Activated T-helper 1 cell treated with anti-CD3 and anti-CD28 coated beads, Interleukin-12 subunit alpha, Interleukin-12 subunit beta, Interleukin-2, Interleukin-4 antibody, amounts not matched to agents 30 ng/mL and 10 ng/mL and 1 ng/mL, durations not matched to agents 14 hours and 24 hours and 36 hours (primary cell): ENCODE measurements at regions of chr7 and their contacts with region 1.

Region 1: DNA sequence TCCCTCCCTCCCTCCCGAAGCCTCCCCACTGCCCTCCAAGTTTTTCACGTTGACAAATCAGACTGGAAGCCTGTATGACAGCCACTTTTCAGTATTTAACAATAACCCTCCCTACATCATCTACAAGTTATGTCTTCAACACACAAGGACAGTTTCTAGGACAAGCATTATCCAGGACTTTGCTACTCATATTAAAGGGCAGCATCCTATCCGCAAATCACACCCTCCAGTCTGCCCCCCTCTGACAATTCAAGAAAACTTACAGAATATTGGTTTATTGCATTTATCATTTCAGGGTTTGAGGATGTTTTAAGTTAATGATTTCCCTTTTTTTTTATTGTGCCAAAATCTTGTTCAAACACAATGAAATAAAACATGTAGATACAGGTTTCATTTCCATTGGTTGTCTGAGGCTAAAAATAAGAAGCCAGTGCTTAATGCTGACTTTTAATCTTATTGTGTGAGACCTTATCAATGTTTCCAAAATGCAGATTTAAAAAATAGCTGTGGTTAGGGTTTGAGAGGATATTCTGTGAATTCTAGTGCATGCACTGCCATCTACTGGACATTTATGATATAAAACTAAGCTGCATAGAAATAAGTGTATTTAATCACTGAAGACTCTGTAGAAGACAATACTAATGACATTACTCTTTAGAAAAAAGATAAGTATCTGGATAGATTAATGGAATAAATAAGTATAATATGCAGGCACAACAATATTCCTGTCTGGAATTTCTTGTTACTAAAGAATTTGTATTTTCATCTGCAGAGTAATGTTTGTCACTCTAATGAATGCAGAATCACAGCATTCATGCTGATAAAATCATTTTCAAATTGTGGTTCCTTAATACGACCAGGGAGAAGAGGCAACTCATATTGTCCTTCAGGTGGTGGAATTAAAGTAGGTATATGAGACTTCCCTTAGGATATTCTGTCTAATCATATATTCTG is 64.1 kb downstream of the CAV1 start:
- DNase-seq: no peak
- H3K4me3 Mint-ChIP-seq: no peak overlapping the region
- H3K27ac Mint-ChIP-seq: peak overlapping the region; percentile 50
- H3K4me1 Mint-ChIP-seq: peaks cover 17% of the 10 kb centered on the region
- H3K27me3 Mint-ChIP-seq: peaks cover 21% of the 10 kb centered on the region

Region 2: DNA sequence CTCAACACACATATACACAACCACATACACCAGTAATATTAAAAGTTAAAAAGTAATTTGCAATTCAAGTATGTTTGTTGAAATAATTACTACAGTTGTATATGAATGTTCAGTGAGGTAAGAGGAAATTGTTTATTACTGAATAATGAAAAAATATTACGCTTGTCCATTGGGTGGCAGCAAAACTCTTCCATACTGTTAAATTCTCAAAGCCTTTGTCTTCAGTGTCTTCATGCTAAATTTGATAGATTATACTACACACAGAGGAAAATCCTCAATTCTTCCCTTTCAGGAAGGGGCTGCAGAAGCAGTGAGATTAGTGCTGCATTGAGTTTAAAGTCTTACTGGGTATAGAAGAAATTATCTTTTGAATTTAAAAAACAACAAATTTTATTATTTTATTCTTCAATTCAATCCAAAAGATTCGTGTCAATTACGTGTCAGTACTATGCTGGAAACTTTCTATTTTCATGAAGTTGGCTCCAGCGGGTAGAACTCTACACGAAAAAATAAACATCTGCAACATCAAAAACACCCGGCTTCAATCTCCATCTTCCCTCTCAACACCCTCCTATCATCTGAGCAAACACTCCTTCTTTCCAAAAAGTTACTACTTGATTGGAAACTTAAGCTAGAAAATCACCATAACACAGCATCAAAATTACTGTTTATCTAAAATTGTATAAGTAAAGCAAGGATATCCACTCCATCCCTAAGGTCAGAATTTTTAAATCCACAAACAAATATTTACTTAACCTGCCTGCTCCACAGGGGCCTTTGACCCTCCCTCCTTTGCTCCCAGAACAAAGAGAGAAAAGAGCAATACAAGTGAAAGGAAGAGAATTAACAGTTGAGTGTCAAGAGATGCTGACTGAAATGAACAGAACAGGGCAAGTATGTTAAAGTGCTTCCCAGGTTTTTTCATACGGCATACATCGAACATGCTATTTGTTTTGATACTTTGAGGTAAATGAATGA is 415.6 kb before region 1 on chr7:
- intact Hi-C with region 1: loop called (anchors 1 kb)
- DNase-seq: no peak
- H3K4me3 Mint-ChIP-seq: no peak overlapping the region
- H3K27ac Mint-ChIP-seq: no peak overlapping the region
- H3K4me1 Mint-ChIP-seq: no peaks in the 10 kb centered on the region
- H3K27me3 Mint-ChIP-seq: peaks cover 13% of the 10 kb centered on the region

Region 3: DNA sequence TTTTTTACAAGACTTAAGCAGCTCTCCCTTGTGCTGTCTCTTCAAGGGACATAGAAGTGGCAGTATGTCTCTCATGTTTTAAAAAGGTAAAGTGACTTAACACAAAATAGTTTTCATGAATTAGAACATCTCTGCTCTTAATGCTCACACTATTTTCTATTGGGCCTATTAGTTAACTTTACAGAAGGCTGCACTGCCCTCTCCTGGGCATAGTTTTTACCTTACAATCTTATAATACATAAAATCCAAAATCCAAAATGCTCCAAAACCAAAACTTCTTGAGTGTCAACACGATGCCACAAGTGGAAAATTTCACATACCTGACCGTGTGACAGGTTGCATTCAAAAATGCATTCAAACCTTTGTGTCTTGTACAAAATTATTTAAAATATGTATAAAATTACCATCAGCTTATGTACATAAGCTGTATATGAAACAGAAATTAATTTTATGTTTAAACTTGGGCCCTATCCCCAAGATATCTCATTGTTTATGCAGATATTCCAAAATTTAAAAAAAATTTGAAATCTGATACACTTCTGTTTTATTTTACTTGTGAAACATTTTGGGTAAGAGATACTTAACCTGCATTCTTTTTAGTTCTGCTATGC is 352.8 kb before region 1 on chr7:
- intact Hi-C with region 1: loop called (anchors 1 kb)
- DNase-seq: peak; percentile 16
- H3K4me3 Mint-ChIP-seq: no peak overlapping the region
- H3K27ac Mint-ChIP-seq: no peak overlapping the region
- H3K4me1 Mint-ChIP-seq: peaks cover 23% of the 10 kb centered on the region
- H3K27me3 Mint-ChIP-seq: no peaks in the 10 kb centered on the region

Region 4: DNA sequence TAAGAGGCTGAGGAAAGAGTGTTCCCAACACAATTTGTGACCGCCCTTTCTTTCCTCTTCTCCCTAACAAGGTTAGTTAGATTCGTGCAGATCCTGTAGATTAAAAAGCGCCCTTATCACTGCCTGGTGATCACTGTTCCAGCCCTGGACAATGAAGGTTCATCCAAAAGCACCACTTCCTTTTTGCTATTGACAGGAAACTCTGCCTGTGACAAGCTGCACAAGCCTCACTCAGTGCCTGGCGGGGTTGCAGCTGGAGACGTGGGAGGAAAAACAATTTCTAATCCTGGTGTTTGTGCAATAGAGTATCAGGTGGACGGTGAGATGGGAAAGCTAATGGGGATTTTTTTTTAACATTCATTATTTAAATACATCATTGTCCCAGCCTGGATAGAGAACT is 195.3 kb before region 1 on chr7:
- intact Hi-C with region 1: no loop called
- DNase-seq: no peak
- H3K4me3 Mint-ChIP-seq: no peak overlapping the region
- H3K27ac Mint-ChIP-seq: no peak overlapping the region
- H3K4me1 Mint-ChIP-seq: no peaks in the 10 kb centered on the region
- H3K27me3 Mint-ChIP-seq: peaks cover 4% of the 10 kb centered on the region

Region 5: GRCh38 chr7:116525913-116526861 is 62.7 kb before region 1 on chr7:
- intact Hi-C with region 1: loop called (anchors 1 kb)
- DNase-seq: peak; percentile 54
- H3K4me3 Mint-ChIP-seq: peak overlapping the region; percentile 85
- H3K27ac Mint-ChIP-seq: peak overlapping the region; percentile 40
- H3K4me1 Mint-ChIP-seq: peaks cover 39% of the 10 kb centered on the region
- H3K27me3 Mint-ChIP-seq: peaks cover 69% of the 10 kb centered on the region

Region 6: GRCh38 chr7:116736927-116737715 is 148.2 kb after region 1 on chr7:
- intact Hi-C with region 1: no loop called
- DNase-seq: no peak
- H3K4me3 Mint-ChIP-seq: no peak overlapping the region
- H3K27ac Mint-ChIP-seq: no peak overlapping the region
- H3K4me1 Mint-ChIP-seq: no peaks in the 10 kb centered on the region
- H3K27me3 Mint-ChIP-seq: peaks cover 4% of the 10 kb centered on the region

Region 7: GRCh38 chr7:116809636-116810266 is 220.8 kb after region 1 on chr7:
- intact Hi-C with region 1: loop called (anchors 1 kb)
- DNase-seq: peak; percentile 3
- H3K4me3 Mint-ChIP-seq: no peak overlapping the region
- H3K27ac Mint-ChIP-seq: no peak overlapping the region
- H3K4me1 Mint-ChIP-seq: no peaks in the 10 kb centered on the region
- H3K27me3 Mint-ChIP-seq: peaks cover 9% of the 10 kb centered on the region

Region 8: GRCh38 chr7:116948934-116949333 is 360.0 kb after region 1 on chr7:
- intact Hi-C with region 1: no loop called
- DNase-seq: no peak
- H3K4me3 Mint-ChIP-seq: no peak overlapping the region
- H3K27ac Mint-ChIP-seq: no peak overlapping the region
- H3K4me1 Mint-ChIP-seq: no peaks in the 10 kb centered on the region
- H3K27me3 Mint-ChIP-seq: peaks cover 22% of the 10 kb centered on the region